Endothelial cell of umbilical vein (primary cell): ENCODE measurements at regions of chr7 and their contacts with region 1.

Region 1: GRCh38 chr7:30938435-30939316 is 25.1 kb upstream of the GHRHR start:
- DNase-seq: peak; percentile 78
- H3K4me3 ChIP-seq: no peak overlapping the region
- H3K27ac ChIP-seq: no peak overlapping the region
- H3K4me1 ChIP-seq: no peaks in the 10 kb centered on the region
- H3K27me3 ChIP-seq: peaks cover 14 to 45% of the 10 kb centered on the region in 2 experiments
- CTCF ChIP-seq: peak; percentile 94 to 96
- POLR2A ChIP-seq: no peak

Region 2: DNA sequence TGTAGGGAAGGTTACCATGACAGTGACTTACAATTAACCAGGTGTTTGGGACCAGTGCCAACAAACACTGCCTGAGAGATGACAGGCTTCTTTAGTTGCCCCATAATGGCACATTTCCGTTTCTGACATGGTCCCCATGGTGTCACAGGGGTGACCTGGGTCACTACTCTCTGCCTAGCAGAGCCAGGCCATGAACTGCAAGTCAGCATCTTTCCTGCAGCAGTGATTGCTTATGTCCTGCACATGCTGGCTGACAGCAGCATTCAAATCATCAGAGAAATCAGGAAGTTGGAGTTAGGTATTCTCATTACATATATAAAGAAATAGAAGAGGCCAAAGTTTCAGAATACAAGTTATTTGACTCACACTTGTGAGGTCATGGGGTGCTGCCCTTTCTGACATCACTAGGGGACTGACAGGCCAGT is 701.4 kb before region 1 on chr7:
- CTCF ChIA-PET with region 1: no interaction called
- POLR2A ChIA-PET with region 1: no interaction called
- dilution Hi-C with region 1: no loop called
- intact Hi-C with region 1: no loop called
- DNase-seq: no peak
- H3K4me3 ChIP-seq: no peak overlapping the region
- H3K27ac ChIP-seq: no peak overlapping the region
- H3K4me1 ChIP-seq: no peaks in the 10 kb centered on the region
- H3K27me3 ChIP-seq: peaks cover 4 to 5% of the 10 kb centered on the region in 2 experiments
- CTCF ChIP-seq: no peak
- POLR2A ChIP-seq: no peak

Region 3: GRCh38 chr7:30800785-30801252 is 137.9 kb before region 1 on chr7:
- CTCF ChIA-PET with region 1: interaction called, 15 read pairs
- POLR2A ChIA-PET with region 1: no interaction called
- dilution Hi-C with region 1: no loop called
- intact Hi-C with region 1: loop called (anchors 1 kb)
- DNase-seq: peak; percentile 80
- H3K4me3 ChIP-seq: no peak overlapping the region
- H3K27ac ChIP-seq: no peak overlapping the region
- H3K4me1 ChIP-seq: peaks cover 58% of the 10 kb centered on the region
- H3K27me3 ChIP-seq: no peaks in the 10 kb centered on the region
- CTCF ChIP-seq: peak; percentile 62 to 70
- POLR2A ChIP-seq: no peak

Region 4: GRCh38 chr7:30880090-30880720 is 58.5 kb before region 1 on chr7:
- CTCF ChIA-PET with region 1: interaction called, 11 read pairs
- POLR2A ChIA-PET with region 1: no interaction called
- dilution Hi-C with region 1: no loop called
- intact Hi-C with region 1: no loop called
- DNase-seq: no peak
- H3K4me3 ChIP-seq: no peak overlapping the region
- H3K27ac ChIP-seq: no peak overlapping the region
- H3K4me1 ChIP-seq: no peaks in the 10 kb centered on the region
- H3K27me3 ChIP-seq: peaks cover 0 to 4% of the 10 kb centered on the region in 2 experiments
- CTCF ChIP-seq: no peak
- POLR2A ChIP-seq: no peak

Region 5: DNA sequence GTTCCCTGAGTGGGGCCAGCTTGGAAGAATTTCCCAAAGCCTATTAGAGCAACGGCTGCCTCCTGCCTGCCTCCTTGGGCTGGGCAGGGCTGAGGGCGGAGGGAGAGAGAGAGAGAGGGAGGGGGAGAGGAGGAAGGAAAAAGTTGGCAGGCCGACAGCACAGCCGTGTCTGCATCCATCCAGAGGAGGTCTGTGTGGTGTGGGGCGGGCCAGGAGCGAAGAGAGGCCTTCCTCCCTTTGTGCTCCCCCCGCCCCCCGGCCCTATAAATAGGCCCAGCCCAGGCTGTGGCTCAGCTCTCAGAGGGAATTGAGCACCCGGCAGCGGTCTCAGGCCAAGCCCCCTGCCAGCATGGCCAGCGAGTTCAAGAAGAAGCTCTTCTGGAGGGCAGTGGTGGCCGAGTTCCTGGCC is 27.1 kb before region 1 on chr7 and contains the start of gene AQP1:
- CTCF ChIA-PET with region 1: interaction called, 12 read pairs
- POLR2A ChIA-PET with region 1: no interaction called
- dilution Hi-C with region 1: no loop called
- intact Hi-C with region 1: no loop called
- DNase-seq: peak; percentile 72
- H3K4me3 ChIP-seq: peak within 1 kb of the TSS in 1 of 3 experiments; percentile 39
- H3K27ac ChIP-seq: no peak within 1 kb of the TSS
- H3K4me1 ChIP-seq: peaks cover 9% of the 10 kb centered on the region
- H3K27me3 ChIP-seq: no peaks in the 10 kb centered on the region
- CTCF ChIP-seq: no peak
- POLR2A ChIP-seq: no peak
- total RNA-seq, gene AQP1: 11.6 and 15.9 TPM in 2 replicates

Region 6: GRCh38 chr7:30954914-30955313 is 16.2 kb after region 1 on chr7:
- CTCF ChIA-PET with region 1: interaction called, 22 read pairs
- POLR2A ChIA-PET with region 1: no interaction called
- dilution Hi-C with region 1: no loop called
- intact Hi-C with region 1: no loop called
- DNase-seq: no peak
- H3K4me3 ChIP-seq: no peak overlapping the region
- H3K27ac ChIP-seq: no peak overlapping the region
- H3K4me1 ChIP-seq: no peaks in the 10 kb centered on the region
- H3K27me3 ChIP-seq: peaks cover 13 to 18% of the 10 kb centered on the region in 2 experiments
- CTCF ChIP-seq: no peak
- POLR2A ChIP-seq: no peak

Region 7: DNA sequence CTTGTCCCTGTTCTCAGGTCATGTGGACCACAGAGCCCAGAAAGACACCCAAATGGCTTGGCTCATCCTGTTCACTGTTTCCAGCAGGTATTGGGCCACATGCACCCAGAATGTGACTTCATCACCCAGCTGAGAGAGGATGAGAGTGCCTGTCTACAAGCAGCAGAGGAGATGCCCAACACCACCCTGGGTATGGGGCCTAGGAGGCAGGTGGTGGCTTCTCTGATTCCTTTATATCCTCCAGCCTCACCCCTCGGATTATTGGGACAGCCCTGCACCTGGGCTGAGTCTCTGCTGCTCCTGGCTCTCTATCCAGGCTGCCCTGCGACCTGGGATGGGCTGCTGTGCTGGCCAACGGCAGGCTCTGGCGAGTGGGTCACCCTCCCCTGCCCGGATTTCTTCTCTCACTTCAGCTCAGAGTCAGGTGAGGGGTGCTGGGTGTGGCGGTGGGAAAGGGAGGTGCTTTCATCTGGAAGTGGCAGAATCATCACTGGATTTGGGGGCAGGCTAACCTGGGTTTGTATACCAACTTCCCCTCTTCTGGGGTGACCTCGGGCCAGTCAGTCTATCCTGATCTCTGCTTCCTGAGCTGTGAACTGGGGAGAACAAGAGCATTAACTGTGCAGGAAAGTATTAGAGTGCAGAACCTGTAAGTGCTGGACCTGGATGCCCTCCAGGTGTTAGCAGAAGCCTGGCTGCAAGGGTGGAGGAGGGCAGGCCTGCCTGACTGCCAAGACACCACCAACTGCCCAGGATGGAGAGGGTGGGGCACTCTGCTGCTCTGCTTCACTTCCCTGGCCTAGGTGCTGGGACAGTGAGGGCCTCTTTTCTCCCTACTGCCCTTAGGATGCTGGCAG is 30.3 kb after region 1 on chr7:
- CTCF ChIA-PET with region 1: interaction called, 18 read pairs
- POLR2A ChIA-PET with region 1: no interaction called
- dilution Hi-C with region 1: no loop called
- intact Hi-C with region 1: loop called (anchors 2 kb)
- DNase-seq: no peak
- H3K4me3 ChIP-seq: no peak overlapping the region
- H3K27ac ChIP-seq: no peak overlapping the region
- H3K4me1 ChIP-seq: no peaks in the 10 kb centered on the region
- H3K27me3 ChIP-seq: peaks cover 19 to 31% of the 10 kb centered on the region in 2 experiments
- CTCF ChIP-seq: no peak
- POLR2A ChIP-seq: no peak

Region 8: DNA sequence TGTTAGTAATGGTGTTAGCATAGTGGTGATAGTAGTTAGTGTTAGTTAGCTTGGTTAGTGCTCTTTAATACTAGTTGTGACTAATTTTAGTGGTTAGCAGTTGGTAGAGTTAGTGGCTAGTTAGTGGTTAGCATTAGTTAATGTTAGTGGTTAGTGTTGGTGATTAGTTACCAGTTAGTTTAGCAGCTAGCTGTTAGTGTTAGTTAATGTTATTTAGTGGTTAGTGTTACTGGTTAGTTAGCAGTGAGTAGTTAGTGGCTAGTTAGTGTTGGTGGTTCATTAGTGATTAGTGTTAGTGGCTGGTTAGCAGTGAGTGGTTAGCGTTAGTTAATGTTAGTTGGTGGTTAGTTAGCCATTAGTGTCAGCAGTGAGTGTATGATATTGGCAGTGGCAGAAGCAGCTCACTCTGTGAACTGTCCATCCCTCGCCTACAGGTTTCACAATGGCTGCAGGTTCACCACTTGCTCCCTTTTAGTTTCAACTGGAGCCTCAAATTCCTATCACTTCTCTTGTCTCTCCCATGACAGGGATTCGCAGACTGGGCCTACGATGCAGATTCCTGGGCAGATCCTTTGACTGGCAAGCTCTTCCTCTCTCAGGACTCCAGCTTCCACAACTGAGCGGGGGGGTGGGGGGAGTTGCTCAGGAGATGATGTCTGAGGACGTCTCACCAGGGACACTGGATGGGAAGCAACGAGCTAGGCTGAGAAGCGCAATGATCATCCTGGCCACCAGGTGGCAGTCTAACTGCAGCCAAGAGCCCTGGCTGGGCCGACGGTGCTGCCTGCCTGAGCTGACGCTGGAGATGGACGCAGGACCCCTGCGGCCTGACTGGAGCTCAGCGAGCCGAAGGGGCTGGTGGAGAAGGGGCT is 44.6 kb after region 1 on chr7:
- CTCF ChIA-PET with region 1: interaction called, 33 read pairs
- POLR2A ChIA-PET with region 1: interaction called, 13 read pairs
- dilution Hi-C with region 1: no loop called
- intact Hi-C with region 1: no loop called
- DNase-seq: peak; percentile 75
- H3K4me3 ChIP-seq: no peak overlapping the region
- H3K27ac ChIP-seq: no peak overlapping the region
- H3K4me1 ChIP-seq: peaks cover 26% of the 10 kb centered on the region
- H3K27me3 ChIP-seq: peaks cover 4 to 5% of the 10 kb centered on the region in 2 experiments
- CTCF ChIP-seq: peak; percentile 80 to 99
- POLR2A ChIP-seq: no peak